Posterior vena cava (tissue), 2 donors: ENCODE measurements at regions of chr4 and their contacts with region 1.

Region 1: GRCh38 chr4:184053434-184053833 is 148.3 kb downstream of the STOX2 start:
- DNase-seq: no peak

Region 2: DNA sequence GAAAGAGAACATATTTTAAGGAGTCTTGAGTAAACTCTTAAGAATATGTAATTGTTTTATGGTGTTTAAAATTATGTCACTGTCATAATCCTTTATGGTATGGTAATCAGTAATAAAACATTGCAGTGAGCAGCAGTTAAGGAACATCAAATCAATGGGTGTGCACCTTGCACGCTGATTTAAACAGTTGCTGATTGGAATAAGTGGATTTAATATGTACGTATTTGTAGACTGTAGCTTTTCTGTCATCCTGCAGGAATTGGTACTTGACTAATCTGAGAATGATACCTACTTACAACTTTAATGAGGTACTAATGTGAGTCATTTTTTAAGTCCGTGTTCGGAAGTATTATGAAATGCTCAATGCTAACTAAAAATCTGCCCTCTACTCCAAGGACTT is 1348.5 kb before region 1 on chr4:
- intact Hi-C with region 1: loop called in 1 of 2 experiments (anchors 5 kb)
- DNase-seq: no peak

Region 3: GRCh38 chr4:183936574-183937345 is 116.7 kb before region 1 on chr4:
- intact Hi-C with region 1: no loop called
- DNase-seq: no peak